ENCODE measurements at regions of chr17 and their contacts with region 1.

Region 1: GRCh38 chr17:59815965-59816364 is 76.8 kb downstream of the TUBD1 start:
- DNase-seq: no peak
- H3K4me3 ChIP-seq: no peak overlapping the region
- H3K27ac ChIP-seq: peak overlapping the region; percentile 50
- H3K4me1 ChIP-seq: peaks cover 11% of the 10 kb centered on the region
- H3K27me3 ChIP-seq: no peaks in the 10 kb centered on the region
- CTCF ChIP-seq: no peak

Region 2: GRCh38 chr17:59406808-59407429 is 409.0 kb before region 1 on chr17:
- CTCF ChIA-PET with region 1: no interaction called
- POLR2A ChIA-PET with region 1: no interaction called
- intact Hi-C with region 1: no loop called
- DNase-seq: peak; percentile 56 to 88
- H3K4me3 ChIP-seq: no peak overlapping the region
- H3K27ac ChIP-seq: no peak overlapping the region
- H3K4me1 ChIP-seq: peaks cover 19% of the 10 kb centered on the region
- H3K27me3 ChIP-seq: no peaks in the 10 kb centered on the region
- CTCF ChIP-seq: no peak

Region 3: DNA sequence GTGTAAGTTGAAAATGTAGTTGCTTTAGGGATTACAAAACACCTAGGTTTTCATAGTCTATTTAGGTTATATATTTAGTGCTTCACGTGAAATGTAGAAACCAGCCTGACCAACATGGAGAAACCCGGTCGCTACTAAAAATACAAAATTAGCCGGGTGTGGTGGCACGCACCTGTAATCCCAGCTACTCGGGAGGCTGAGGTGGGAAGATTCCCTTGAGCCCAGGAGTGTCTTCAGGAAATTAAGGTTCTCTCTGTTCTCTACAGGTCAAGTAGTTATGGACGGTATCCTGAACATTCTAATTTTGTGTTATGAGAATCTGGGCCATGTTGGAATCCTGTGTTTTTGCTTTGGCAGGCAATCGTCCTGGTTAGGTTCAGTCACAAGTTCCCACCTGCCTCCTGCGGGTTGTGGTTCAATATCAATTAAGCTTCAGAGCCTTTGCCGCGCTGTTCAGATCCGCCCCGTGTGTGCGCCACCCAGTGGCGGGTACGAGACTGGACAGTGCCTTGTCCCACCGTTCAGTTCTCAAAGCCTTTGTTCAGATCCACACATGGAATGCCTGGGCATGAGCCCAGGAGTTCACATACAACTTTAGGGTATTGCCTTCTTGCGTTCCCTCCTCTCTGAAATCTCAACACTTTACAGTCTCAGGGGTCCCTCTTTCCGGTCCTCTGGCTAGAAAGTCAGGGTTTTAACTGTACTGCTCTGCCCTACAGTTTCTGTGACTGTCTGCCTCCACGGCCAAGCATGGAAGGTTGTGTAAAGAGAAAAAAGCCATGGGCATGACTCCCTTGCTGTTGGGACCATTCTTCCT is 221.0 kb after region 1 on chr17:
- CTCF ChIA-PET with region 1: interaction called, 10 read pairs
- POLR2A ChIA-PET with region 1: no interaction called
- intact Hi-C with region 1: no loop called
- DNase-seq: peak; percentile 71 to 72
- H3K4me3 ChIP-seq: no peak overlapping the region
- H3K27ac ChIP-seq: no peak overlapping the region
- H3K4me1 ChIP-seq: no peaks in the 10 kb centered on the region
- H3K27me3 ChIP-seq: no peaks in the 10 kb centered on the region
- CTCF ChIP-seq: peak; percentile 93

Region 4: DNA sequence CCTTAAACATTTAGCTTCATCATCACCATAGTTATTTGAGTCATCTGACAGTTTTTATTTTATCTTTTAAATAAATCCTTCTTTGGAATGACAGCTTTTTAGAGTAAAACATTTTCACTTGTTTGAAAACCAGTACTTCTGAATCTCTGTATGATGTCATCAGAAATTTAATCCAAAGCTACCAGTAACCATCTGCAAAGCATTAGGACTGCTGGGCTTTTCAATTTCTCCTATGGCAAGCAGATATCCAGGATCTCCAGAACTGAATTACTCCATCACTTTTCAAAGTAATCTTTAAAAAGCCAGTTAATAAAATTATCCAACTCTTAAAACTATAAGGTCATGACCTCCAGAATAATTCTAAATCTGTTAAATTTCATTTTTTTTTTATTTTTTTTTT is 657.8 kb after region 1 on chr17:
- CTCF ChIA-PET with region 1: no interaction called
- POLR2A ChIA-PET with region 1: no interaction called
- intact Hi-C with region 1: no loop called
- DNase-seq: no peak
- H3K4me3 ChIP-seq: no peak overlapping the region
- H3K27ac ChIP-seq: no peak overlapping the region; the same call in 1 of the 2 replicates
- H3K4me1 ChIP-seq: peaks cover 11% of the 10 kb centered on the region
- H3K27me3 ChIP-seq: no peaks in the 10 kb centered on the region
- CTCF ChIP-seq: no peak

Measured in PC-9 (cell line).